Activated naive CD4-positive, alpha-beta T cell treated with anti-CD3 and anti-CD28 coated beads for 36 hours (primary cell): ENCODE measurements at regions of chr12 and their contacts with region 1.

Region 1: DNA sequence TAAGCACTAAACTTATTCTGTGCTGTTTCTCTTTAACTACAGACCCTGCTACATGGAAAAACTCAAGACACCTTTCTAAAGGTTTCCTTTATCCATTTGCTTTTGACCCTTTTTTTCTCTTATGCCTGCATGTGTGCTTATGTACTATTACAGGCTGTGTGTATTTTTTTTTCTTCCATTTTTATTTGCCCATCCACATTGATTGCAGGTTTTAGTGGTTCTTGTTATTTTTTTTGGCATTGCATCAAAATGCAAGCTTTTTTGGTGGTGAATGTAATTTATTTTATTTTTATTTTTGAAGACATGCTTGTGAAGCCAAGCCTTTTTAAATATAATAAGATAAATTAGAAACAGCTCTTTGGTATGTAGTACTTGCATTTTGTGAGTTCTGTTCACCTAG is 26.7 kb downstream of the DNM1L start:
- DNase-seq: no peak
- H3K4me3 Mint-ChIP-seq: no peak overlapping the region
- H3K27ac Mint-ChIP-seq: no peak overlapping the region
- H3K4me1 Mint-ChIP-seq: no peaks in the 10 kb centered on the region
- H3K27me3 Mint-ChIP-seq: no peaks in the 10 kb centered on the region

Region 2: GRCh38 chr12:32688786-32689185 is 17.0 kb before region 1 on chr12:
- CTCF ChIA-PET with region 1: no interaction called
- intact Hi-C with region 1: loop called (anchors 2 kb)
- DNase-seq: no peak
- H3K4me3 Mint-ChIP-seq: no peak overlapping the region
- H3K27ac Mint-ChIP-seq: no peak overlapping the region
- H3K4me1 Mint-ChIP-seq: peaks cover 37% of the 10 kb centered on the region
- H3K27me3 Mint-ChIP-seq: no peaks in the 10 kb centered on the region

Region 3: GRCh38 chr12:32765906-32766305 is 60.1 kb after region 1 on chr12:
- CTCF ChIA-PET with region 1: no interaction called
- intact Hi-C with region 1: no loop called
- DNase-seq: no peak
- H3K4me3 Mint-ChIP-seq: no peak overlapping the region
- H3K27ac Mint-ChIP-seq: no peak overlapping the region
- H3K4me1 Mint-ChIP-seq: no peaks in the 10 kb centered on the region
- H3K27me3 Mint-ChIP-seq: peaks cover 7% of the 10 kb centered on the region

Region 4: GRCh38 chr12:33023760-33024159 is 318.0 kb after region 1 on chr12:
- CTCF ChIA-PET with region 1: no interaction called
- intact Hi-C with region 1: no loop called
- DNase-seq: no peak
- H3K4me3 Mint-ChIP-seq: no peak overlapping the region
- H3K27ac Mint-ChIP-seq: no peak overlapping the region
- H3K4me1 Mint-ChIP-seq: no peaks in the 10 kb centered on the region
- H3K27me3 Mint-ChIP-seq: no peaks in the 10 kb centered on the region